ENCODE measurements at regions of chr12 and their contacts with region 1.

Region 1: GRCh38 chr12:1650260-1650977 is 21.4 kb downstream of the WNT5B start:
- DNase-seq: no peak
- H3K4me3 ChIP-seq: no peak overlapping the region
- H3K27me3 ChIP-seq: no peaks in the 10 kb centered on the region
- CTCF ChIP-seq: no peak

Region 2: DNA sequence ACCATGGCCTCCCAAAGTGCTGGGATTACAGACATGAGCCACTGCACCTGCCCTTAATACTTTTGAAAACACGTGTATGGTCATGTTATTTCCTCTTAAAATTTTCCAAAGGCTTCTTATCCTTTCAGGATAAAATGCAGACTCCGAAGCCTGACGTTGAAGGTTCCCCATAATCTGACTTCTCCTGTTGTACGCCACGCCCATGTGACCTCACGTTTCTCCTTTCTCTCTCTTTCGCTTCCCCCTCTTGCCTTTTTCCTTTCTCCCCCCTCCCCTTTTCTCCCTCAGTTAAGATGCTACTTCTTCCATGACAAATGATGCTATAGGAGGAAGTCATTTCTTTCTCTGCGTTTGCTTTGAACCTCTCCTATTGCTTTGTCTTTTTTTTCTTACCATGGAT is 322.0 kb before region 1 on chr12:
- CTCF ChIA-PET with region 1: no interaction called
- POLR2A ChIA-PET with region 1: no interaction called
- DNase-seq: no peak
- H3K4me3 ChIP-seq: no peak overlapping the region
- H3K27me3 ChIP-seq: no peaks in the 10 kb centered on the region
- CTCF ChIP-seq: no peak

Region 3: GRCh38 chr12:1559676-1560091 is 90.7 kb before region 1 on chr12:
- CTCF ChIA-PET with region 1: no interaction called
- POLR2A ChIA-PET with region 1: no interaction called
- DNase-seq: no peak
- H3K4me3 ChIP-seq: no peak overlapping the region
- H3K27me3 ChIP-seq: no peaks in the 10 kb centered on the region
- CTCF ChIP-seq: no peak

Region 4: DNA sequence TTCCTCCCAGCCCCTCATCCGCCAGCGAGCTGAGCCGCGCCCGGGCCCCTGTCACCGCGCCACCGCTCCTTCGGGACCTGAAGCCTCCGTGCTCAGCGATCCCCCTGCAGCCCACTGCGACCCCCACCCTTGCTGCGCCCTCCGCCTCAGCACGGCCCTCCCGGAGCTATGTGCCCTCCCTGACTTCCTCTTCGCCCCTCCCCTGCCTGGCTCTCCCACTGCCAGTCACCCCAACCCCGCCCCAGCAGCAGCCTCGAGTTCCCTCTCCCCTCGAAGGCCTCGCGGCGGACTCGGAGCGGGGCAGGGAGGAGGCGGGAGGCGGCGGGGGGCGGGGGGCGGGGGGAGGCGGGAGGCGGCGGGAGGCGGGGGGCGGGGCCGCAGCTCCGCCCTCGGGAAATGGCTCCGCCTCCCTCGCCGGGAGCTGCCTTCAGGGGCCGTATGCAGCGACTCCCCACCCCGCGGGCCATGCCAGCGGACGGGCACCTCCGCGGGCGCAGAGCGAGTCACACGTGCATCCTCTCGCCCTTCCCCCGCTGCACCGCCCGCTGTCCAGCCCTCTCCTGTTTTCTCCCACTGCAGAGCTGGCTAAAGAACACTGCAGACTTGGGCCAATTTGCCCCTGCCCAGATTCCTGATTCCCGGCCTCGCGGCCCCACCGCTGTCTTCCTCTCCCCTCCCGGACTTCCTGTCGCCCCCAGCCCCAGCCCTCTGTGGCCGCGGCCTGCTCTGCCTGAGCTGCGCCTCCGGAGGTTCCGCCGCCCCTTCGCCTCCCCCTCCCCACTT is 11.3 kb after region 1 on chr12:
- CTCF ChIA-PET with region 1: interaction called, 12 read pairs
- POLR2A ChIA-PET with region 1: no interaction called
- DNase-seq: peak; percentile 37
- H3K4me3 ChIP-seq: peak overlapping the region; percentile 47
- H3K27me3 ChIP-seq: no peaks in the 10 kb centered on the region
- CTCF ChIP-seq: no peak

Region 5: DNA sequence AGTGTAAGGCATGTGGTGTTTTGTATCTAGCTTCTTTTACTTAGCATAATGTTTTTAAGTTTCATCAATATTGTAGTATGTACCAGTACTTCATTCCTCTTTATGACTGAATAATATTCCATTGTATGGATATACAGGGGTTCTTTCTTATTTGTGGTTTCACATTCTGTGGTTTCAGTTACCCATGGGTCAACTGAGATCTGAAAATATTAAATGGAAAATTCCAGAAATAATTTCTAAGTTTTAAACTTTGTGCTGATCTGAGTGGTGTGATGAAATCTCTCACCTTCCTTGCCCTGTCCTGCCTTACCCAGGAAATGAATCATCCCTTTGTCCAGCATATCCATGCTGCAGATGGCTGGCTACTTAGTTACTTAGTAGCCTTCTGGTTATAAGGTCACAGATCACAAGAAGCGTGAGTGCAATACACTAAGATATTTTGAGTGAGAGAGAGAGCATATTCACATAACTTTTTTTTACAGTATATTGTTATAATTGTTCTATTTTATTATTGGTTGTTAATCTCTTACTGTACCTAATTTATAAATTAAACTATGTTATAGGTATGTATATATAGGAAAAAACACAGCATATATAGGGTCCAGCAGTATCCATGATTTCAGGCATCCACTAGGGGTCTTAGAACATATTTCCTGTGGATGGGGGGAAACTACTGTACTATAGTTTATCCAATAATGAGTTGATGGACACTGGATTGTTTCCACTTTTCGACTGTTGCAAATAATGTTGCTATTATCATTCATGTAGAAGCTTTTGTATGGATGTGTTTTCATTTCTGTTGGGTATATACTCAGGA is 110.4 kb after region 1 on chr12:
- CTCF ChIA-PET with region 1: no interaction called
- POLR2A ChIA-PET with region 1: no interaction called
- DNase-seq: no peak
- H3K4me3 ChIP-seq: no peak overlapping the region
- H3K27me3 ChIP-seq: no peaks in the 10 kb centered on the region
- CTCF ChIP-seq: no peak

Measured in BJ (cell line).